IMR-90 (cell line): ENCODE measurements at regions of chr5 and their contacts with region 1.

Region 1: GRCh38 chr5:149561848-149562247 is 10.6 kb upstream of the CSNK1A1 start:
- DNase-seq: peak; percentile 98
- ATAC-seq: peak; percentile 72
- H3K4me3 ChIP-seq: no peak overlapping the region
- H3K27ac ChIP-seq: peak overlapping the region; percentile 100
- H3K4me1 ChIP-seq: peaks cover 14% of the 10 kb centered on the region
- H3K27me3 ChIP-seq: no peaks in the 10 kb centered on the region
- CTCF ChIP-seq: no peak
- POLR2A ChIP-seq: no peak
- RAD21 ChIP-seq: no peak

Region 2: DNA sequence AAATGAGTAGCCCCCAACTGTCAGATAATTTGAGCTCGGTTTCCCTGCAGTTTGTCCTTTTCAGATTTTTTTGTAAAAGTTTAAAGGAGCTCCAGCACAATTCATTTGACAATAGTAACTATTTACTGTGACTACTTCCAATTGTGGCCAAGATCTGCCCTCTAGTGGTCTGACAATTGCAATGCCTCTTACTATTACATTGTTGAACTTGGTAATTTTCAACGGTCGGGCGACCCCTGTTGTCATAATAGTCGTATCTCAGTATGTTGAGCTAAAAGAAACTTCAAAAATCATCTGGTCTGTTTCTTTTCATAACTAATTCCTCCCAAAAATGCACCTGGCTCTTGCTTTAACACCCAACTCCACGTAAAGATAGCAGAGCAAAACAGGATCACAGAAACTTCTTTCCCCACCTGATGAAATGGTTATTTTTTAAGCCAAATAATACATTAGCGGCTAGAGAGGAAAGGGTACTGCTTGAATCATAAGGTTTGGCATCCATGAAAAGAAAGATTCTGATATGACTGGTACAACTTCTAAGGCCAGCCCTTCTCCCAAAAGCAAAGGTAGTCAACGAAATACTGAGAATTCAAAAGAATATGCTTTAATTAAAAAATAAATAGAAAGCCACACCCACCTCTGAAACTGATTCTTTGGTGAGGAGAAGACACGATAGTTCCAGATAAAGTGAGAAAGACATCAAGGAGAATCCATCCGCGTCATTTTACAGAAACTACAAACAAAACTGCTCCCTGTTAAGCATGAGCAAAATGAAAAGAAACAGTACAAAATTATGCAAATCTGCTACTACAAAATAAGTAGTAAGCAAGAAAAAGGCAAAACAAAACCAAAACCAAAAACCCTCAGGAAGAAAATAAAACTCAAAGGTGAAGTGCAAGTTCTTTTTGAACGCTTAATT is 830.6 kb before region 1 on chr5:
- CTCF ChIA-PET with region 1: no interaction called
- POLR2A ChIA-PET with region 1: no interaction called
- dilution Hi-C with region 1: no loop called
- in situ Hi-C with region 1: no loop called
- intact Hi-C with region 1: loop called (anchors 10 kb)
- DNase-seq: peak; percentile 87
- ATAC-seq: peak; percentile 88
- H3K4me3 ChIP-seq: no peak overlapping the region; the same call in 1 of the 2 replicates
- H3K27ac ChIP-seq: no peak overlapping the region
- H3K4me1 ChIP-seq: peaks cover 11% of the 10 kb centered on the region
- H3K27me3 ChIP-seq: peaks cover 5% of the 10 kb centered on the region
- CTCF ChIP-seq: peak; percentile 100
- POLR2A ChIP-seq: no peak
- RAD21 ChIP-seq: peak; percentile 87

Region 3: GRCh38 chr5:149268928-149269557 is 292.8 kb before region 1 on chr5:
- CTCF ChIA-PET with region 1: no interaction called
- POLR2A ChIA-PET with region 1: no interaction called
- dilution Hi-C with region 1: no loop called
- in situ Hi-C with region 1: no loop called
- intact Hi-C with region 1: loop called (anchors 5 kb)
- DNase-seq: peak; percentile 61
- ATAC-seq: no peak
- H3K4me3 ChIP-seq: no peak overlapping the region
- H3K27ac ChIP-seq: no peak overlapping the region
- H3K4me1 ChIP-seq: peaks cover 4% of the 10 kb centered on the region
- H3K27me3 ChIP-seq: no peaks in the 10 kb centered on the region
- CTCF ChIP-seq: peak; percentile 72
- POLR2A ChIP-seq: no peak
- RAD21 ChIP-seq: peak; percentile 75

Region 4: DNA sequence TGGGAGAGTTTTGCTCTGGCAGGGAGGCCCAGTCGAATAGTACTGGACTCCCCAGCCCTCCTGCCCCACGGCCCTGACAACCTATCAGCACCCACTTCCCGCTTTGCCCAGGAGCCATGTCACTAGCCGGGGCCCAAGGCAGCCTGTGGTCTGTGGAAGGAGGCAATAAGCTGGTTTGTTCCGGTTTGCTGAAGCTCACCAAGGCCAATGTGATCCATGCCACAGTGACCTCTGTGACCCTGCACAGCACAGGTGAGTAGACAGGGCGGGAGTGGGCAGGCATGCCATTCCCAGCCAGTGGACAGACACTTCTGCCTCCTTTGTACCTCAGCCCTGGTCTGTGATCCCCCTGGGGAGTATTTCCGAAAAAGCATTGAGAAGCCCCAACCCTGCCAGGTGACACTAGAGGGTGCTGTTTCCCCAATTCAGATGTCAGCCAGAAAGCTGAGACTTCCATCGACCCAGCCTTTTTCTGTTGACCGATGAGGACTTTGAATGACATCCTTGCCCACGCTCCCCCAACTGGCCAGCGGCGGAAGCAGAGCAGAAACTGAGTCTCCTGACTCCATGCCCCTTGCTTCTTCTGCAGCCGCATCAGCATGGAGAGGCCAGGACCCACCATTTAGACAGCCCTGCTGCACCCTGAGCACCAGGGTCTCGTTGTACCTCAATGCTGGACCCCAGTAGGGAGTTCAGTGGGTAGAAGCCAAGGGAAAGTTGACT is 194.4 kb before region 1 on chr5:
- CTCF ChIA-PET with region 1: interaction called, 4 read pairs
- POLR2A ChIA-PET with region 1: no interaction called
- dilution Hi-C with region 1: no loop called
- in situ Hi-C with region 1: loop called (anchors 5 kb)
- intact Hi-C with region 1: loop called (anchors 5 kb)
- DNase-seq: peak; percentile 70
- ATAC-seq: peak; percentile 85
- H3K4me3 ChIP-seq: no peak overlapping the region
- H3K27ac ChIP-seq: no peak overlapping the region
- H3K4me1 ChIP-seq: 0 out of 2 replicates have a peak, but pooled peaks cover 2% of the 10 kb centered on the region
- H3K27me3 ChIP-seq: no peaks in the 10 kb centered on the region
- CTCF ChIP-seq: peak; percentile 88
- POLR2A ChIP-seq: no peak
- RAD21 ChIP-seq: peak; percentile 83

Region 5: GRCh38 chr5:149434162-149435014 is 127.5 kb before region 1 on chr5:
- CTCF ChIA-PET with region 1: interaction called, 4 read pairs
- POLR2A ChIA-PET with region 1: interaction called, 6 read pairs
- dilution Hi-C with region 1: no loop called
- in situ Hi-C with region 1: loop called (anchors 5 kb)
- intact Hi-C with region 1: loop called (anchors 1 kb)
- DNase-seq: peak; percentile 82
- ATAC-seq: peak; percentile 55
- H3K4me3 ChIP-seq: no peak overlapping the region
- H3K27ac ChIP-seq: no peak overlapping the region
- H3K4me1 ChIP-seq: peaks cover 8% of the 10 kb centered on the region; the same call in 1 of the 2 replicates
- H3K27me3 ChIP-seq: no peaks in the 10 kb centered on the region
- CTCF ChIP-seq: peak; percentile 92
- POLR2A ChIP-seq: peak; percentile 55
- RAD21 ChIP-seq: peak; percentile 80

Region 6: DNA sequence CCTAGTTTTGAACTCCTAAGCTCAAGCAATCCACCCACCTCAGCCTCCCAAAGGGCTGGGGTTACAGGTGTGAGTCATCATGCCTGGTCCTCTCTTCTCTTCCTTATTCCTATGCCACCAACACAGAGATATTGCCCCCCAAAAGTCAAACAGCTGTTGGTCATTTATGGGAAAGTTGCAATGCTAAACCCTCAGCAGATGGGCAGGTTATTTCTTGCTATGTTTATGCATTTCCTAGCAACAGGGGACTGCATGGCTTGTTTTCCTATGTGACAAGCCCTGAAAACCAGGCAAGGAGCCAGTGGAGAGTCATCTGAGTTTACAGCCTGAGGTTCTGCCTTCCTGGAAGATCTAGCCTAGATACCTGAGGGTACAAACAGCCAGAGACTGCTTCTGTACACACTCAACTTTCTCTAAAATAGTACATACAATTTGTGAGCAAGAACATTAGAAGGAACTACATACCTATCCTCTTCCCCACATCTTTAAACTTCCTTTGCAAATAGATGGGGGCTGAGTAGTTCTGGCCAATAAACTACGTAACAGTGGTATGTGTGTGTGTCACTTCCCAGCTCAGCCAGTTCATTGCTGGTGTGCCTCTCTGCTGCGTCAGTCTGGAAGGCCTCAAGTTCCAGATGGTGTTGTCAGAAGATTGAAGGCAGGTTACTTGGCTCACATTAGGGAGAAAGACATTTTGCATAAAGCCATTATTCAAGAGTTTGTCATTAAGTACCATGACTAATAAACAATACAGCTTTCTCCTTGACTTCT is 76.0 kb before region 1 on chr5:
- CTCF ChIA-PET with region 1: interaction called, 3 read pairs
- POLR2A ChIA-PET with region 1: interaction called, 4 read pairs
- dilution Hi-C with region 1: no loop called
- in situ Hi-C with region 1: no loop called
- intact Hi-C with region 1: loop called (anchors 5 kb)
- DNase-seq: peak; percentile 100
- ATAC-seq: peak; percentile 74
- H3K4me3 ChIP-seq: no peak overlapping the region
- H3K27ac ChIP-seq: peak overlapping the region; percentile 84
- H3K4me1 ChIP-seq: peaks cover 31% of the 10 kb centered on the region
- H3K27me3 ChIP-seq: no peaks in the 10 kb centered on the region
- CTCF ChIP-seq: no peak
- POLR2A ChIP-seq: no peak
- RAD21 ChIP-seq: peak; percentile 8; the same call in 1 of the 2 replicates

Region 7: DNA sequence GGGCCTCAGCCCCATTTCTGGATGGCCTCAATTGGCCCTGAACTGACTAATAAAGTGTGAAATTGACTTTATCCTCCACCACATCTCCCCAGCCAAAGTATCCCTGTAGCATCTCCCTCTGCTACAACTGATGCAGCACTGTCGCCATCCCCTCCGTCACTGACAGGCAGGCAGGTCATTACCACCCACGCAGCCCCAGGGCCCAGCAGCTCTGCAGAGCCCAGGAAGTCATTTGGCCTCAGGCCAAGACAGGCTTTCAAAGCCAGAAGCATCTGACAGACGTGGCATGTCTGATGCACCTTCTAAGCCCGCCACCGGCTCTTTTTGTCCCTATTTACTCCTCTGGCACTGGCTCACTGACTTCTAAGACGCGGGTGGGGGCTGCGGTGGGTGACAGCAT is 84.7 kb after region 1 on chr5:
- CTCF ChIA-PET with region 1: no interaction called
- POLR2A ChIA-PET with region 1: no interaction called
- dilution Hi-C with region 1: no loop called
- in situ Hi-C with region 1: no loop called
- intact Hi-C with region 1: no loop called
- DNase-seq: peak; percentile 21
- ATAC-seq: no peak
- H3K4me3 ChIP-seq: no peak overlapping the region
- H3K27ac ChIP-seq: no peak overlapping the region
- H3K4me1 ChIP-seq: no peaks in the 10 kb centered on the region
- H3K27me3 ChIP-seq: peaks cover 42% of the 10 kb centered on the region
- CTCF ChIP-seq: no peak
- POLR2A ChIP-seq: no peak
- RAD21 ChIP-seq: no peak

Region 8: GRCh38 chr5:149675610-149676201 is 113.9 kb after region 1 on chr5:
- CTCF ChIA-PET with region 1: no interaction called
- POLR2A ChIA-PET with region 1: no interaction called
- dilution Hi-C with region 1: no loop called
- in situ Hi-C with region 1: no loop called
- intact Hi-C with region 1: no loop called
- DNase-seq: no peak
- ATAC-seq: no peak
- H3K4me3 ChIP-seq: no peak overlapping the region
- H3K27ac ChIP-seq: no peak overlapping the region
- H3K4me1 ChIP-seq: no peaks in the 10 kb centered on the region
- H3K27me3 ChIP-seq: peaks cover 37% of the 10 kb centered on the region
- CTCF ChIP-seq: no peak
- POLR2A ChIP-seq: no peak
- RAD21 ChIP-seq: no peak